Posterior cingulate gyrus (tissue), 11 donors: ENCODE measurements at regions of chr6 and their contacts with region 1.

Region 1: DNA sequence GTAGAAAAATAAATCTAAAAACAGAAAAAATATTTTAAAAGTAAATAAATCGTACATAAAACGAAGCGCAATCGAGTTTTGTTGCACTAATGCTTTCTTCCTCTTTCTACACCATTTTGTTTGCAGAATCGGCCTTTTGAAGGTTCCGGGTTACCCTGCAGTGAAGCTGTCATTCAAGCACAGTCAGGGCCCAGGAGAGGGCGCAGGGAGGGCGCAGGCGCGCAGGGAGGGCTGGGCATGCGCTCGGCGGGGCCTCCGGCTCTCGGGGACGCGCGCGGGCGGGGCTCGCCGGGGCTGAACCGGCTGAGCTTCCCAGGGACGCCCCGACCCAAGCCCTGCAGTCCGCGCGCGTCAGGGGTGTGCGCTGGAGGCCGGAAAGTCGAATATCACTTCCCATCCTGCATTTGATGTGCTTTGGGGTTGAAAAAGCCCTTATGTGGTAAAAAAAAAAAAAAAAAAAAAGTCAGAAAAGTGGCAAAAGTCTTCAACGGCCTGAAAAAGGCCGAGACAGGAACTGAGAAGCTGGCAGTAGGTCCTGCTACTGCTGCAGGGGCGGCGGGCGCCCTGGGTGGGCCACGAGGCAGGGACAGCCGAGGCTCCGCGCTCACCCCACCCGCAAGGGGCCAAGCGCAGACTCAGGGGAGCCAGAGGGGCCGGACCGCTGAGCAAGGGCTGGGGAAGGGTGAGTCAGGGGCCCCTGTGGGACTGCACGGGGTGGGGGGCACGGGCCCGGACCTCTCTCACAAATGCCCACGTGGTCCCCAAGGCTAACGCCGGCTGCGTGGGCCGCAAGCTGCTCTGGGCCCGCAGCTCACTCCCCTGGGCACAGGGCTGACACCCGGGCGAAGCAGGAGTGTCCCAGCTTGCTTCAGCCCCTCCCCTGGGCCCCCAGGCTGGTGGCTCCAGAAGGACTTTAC is 40.5 kb downstream of the THBS2 start:
- DNase-seq: peak; percentile 86 to 99 (median 91)

Region 2: DNA sequence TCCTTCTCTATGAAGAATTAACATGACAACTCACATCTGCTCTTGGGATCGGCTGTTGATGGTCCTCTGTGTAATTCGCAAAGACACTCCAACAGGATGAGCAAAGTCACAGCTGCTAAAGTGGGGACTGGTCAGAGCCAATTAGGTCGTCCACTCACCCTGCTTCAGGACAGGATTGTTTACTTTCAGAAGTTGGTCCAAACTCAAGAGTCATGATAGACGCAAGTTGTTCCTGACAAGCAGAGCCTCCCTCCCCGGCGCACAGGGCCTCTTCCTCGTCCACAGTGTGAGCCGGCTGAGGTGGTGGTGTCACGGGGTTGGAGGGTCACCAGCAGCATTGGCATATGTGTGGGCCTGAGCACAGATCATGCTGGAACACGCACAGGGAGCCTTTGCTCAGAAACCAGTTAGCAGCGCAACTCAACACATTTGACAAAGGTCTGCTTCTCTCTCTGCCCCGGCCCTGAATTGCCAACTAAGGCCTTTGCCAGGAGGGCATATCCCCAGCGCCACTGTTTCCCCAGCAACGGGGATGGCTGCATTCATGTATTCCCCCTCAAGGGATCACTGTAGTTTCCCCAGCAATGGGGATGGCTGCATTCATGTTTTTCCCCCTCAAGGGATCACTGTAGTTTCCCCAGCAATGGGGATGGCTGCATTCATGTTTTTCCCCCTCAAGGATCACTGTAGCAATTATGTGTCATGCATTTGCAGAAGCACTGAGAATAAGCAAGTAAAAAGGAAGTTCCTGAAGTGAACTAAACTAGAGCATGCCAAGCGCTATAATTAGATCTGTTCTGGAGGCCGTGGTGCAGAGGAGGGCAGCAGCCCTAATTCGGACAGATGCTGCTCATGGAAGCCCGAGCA is 71.3 kb before region 1 on chr6:
- intact Hi-C with region 1: loop called (anchors 10 kb)
- DNase-seq: peak in 8 of 10 donors; percentile 26 to 87 (median 42)

Region 3: DNA sequence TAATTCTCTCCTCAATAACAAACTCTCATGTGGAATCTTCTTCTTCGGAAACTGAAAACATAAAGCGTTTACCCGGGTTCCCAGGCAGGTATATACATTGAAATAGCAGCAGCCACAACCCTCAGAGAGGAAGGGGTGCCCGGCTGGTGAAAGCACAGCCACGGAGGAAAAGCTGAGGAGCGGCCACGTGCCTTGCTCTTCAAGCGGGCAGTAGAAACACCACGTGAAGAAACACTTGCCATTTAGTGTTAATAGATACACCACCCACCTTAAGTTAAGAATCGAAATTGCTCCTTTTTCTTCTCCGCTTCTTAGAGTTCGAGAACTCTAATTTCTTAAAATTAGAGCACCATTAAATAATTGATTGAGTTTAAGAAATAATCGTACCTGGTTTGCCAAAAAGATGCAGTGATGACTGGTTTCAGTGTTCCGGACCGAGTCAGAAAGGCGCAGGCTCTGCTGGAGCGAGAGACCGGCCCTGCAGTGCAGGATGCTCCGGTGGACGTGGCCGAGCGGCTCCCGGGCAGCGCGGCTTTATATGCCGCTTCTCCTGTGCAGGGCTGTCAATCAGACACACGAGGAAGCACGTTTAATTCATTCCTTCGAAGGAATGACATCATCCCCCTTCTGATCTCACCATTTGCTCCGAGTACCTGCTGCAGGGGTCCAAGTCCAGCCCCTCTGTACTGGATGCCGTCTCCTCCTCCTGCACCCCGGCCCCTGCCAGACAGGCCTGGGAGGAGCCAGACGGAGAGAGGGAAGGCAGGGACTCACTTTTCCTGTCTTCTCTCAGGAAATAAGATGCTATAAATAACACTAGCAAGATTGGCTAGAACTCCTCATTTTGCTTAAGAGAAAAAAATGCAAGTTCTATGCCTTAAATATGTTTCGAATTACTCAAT is 40.4 kb after region 1 on chr6 and contains the start of gene THBS2:
- intact Hi-C with region 1: loop called (anchors 5 kb)
- DNase-seq: peak in 5 of 10 donors; percentile 38 to 89 (median 81)